ENCODE measurements at regions of chr18 and their contacts with region 1.

Region 1: GRCh38 chr18:35949903-35950627 is 22.4 kb upstream of the RMP24 start:
- DNase-seq: peak; percentile 52 to 73 (median 69)
- H3K4me3 ChIP-seq: peak overlapping the region; percentile 25 to 78 (median 47)
- H3K4me3 Mint-ChIP-seq: peak overlapping the region; percentile 75 to 77
- H3K27ac ChIP-seq: no peak overlapping the region
- H3K27ac Mint-ChIP-seq: peak overlapping the region in 1 of 7 donors; percentile 31
- H3K4me1 ChIP-seq: peaks cover 8 to 9% of the 10 kb centered on the region in 2 donors
- H3K4me1 Mint-ChIP-seq: peaks cover 9% of the 10 kb centered on the region
- H3K27me3 ChIP-seq: peaks cover 0 to 10% of the 10 kb centered on the region in 2 donors
- H3K27me3 Mint-ChIP-seq: peaks cover 7 to 27% (median 13%) of the 10 kb centered on the region in 3 donors
- CTCF ChIP-seq: peak; percentile 97

Region 2: GRCh38 chr18:35386600-35387351 is 563.3 kb before region 1 on chr18:
- intact Hi-C with region 1: loop called in 1 of 2 experiments (anchors 5 kb)
- DNase-seq: peak; percentile 69 to 75 (median 69)
- H3K4me3 ChIP-seq: no peak overlapping the region
- H3K4me3 Mint-ChIP-seq: no peak overlapping the region
- H3K27ac ChIP-seq: no peak overlapping the region
- H3K27ac Mint-ChIP-seq: peak overlapping the region in 1 of 7 donors; percentile 15
- H3K4me1 ChIP-seq: no peaks in the 10 kb centered on the region
- H3K4me1 Mint-ChIP-seq: peaks cover 7% of the 10 kb centered on the region
- H3K27me3 ChIP-seq: peaks cover 0 to 2% of the 10 kb centered on the region in 2 donors
- H3K27me3 Mint-ChIP-seq: peaks cover 0 to 4% (median 2%) of the 10 kb centered on the region in 3 donors
- CTCF ChIP-seq: peak; percentile 98

Region 3: DNA sequence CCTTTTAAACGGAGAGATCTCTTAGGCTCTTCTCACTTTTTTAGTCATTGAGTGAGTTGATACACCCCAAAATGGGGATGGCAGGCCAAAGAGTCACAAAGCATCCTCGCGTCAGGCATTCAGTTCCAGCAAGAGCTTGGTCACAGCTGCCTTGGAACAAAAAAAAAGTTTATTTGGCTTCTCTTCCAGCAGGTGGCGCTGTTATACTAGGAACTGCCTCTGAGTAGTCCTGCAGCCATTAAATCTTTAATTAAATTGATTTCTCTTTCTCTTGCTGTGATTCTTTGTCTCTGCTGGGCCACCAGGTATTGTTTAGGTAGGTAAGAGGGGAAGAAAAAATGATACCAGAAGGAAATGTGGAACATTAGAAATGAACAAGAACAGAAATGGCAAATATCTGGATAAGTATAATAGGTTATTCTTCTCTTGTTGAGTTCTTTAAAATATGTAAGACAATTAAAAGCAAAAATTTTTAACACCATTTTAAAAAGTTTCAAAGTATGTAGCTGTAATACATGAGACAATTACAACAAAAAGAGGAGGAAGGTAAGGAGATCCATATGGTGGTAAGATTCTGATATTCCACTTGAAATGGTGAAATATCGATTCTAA is 193.5 kb before region 1 on chr18:
- intact Hi-C with region 1: loop called (anchors 2 kb)
- DNase-seq: peak; percentile 44 to 66 (median 65)
- H3K4me3 ChIP-seq: no peak overlapping the region
- H3K4me3 Mint-ChIP-seq: no peak overlapping the region
- H3K27ac ChIP-seq: no peak overlapping the region
- H3K27ac Mint-ChIP-seq: no peak overlapping the region
- H3K4me1 ChIP-seq: peaks cover 0 to 4% of the 10 kb centered on the region in 2 donors
- H3K4me1 Mint-ChIP-seq: peaks cover 7% of the 10 kb centered on the region
- H3K27me3 ChIP-seq: no peaks in the 10 kb centered on the region
- H3K27me3 Mint-ChIP-seq: peaks cover 0 to 9% (median 3%) of the 10 kb centered on the region in 3 donors
- CTCF ChIP-seq: peak; percentile 81

Region 4: DNA sequence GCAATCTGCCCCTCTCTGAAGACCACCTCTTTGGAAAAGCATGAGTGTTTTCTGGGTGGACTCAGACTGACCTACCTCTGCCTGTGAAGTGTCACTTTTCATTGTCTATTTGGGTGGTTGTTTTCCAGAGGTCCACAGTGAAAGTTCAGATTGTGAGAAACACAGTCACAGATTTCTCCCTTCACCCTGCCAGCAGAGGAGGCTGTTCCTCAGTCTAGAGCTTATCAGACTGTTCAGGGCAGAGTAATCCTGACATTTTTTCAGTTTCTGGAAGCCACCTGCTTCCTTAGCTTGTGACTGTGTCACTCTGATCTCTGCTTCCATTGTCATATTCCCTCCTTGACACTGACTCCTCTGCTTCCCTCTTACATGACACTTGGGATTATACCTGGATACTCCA is 33.0 kb before region 1 on chr18:
- intact Hi-C with region 1: no loop called
- DNase-seq: no peak
- H3K4me3 ChIP-seq: no peak overlapping the region
- H3K4me3 Mint-ChIP-seq: no peak overlapping the region
- H3K27ac ChIP-seq: no peak overlapping the region
- H3K27ac Mint-ChIP-seq: no peak overlapping the region
- H3K4me1 ChIP-seq: peaks cover 4 to 6% of the 10 kb centered on the region in 2 donors
- H3K4me1 Mint-ChIP-seq: peaks cover 5% of the 10 kb centered on the region
- H3K27me3 ChIP-seq: no peaks in the 10 kb centered on the region
- H3K27me3 Mint-ChIP-seq: peaks cover 0 to 12% (median 3%) of the 10 kb centered on the region in 3 donors
- CTCF ChIP-seq: no peak

Region 5: GRCh38 chr18:36241831-36242230 is 291.8 kb after region 1 on chr18:
- intact Hi-C with region 1: no loop called
- DNase-seq: no peak
- H3K4me3 ChIP-seq: no peak overlapping the region
- H3K4me3 Mint-ChIP-seq: no peak overlapping the region
- H3K27ac ChIP-seq: no peak overlapping the region
- H3K27ac Mint-ChIP-seq: no peak overlapping the region
- H3K4me1 ChIP-seq: no peaks in the 10 kb centered on the region
- H3K4me1 Mint-ChIP-seq: no peaks in the 10 kb centered on the region
- H3K27me3 ChIP-seq: no peaks in the 10 kb centered on the region
- H3K27me3 Mint-ChIP-seq: peaks cover 0 to 5% (median 4%) of the 10 kb centered on the region in 3 donors
- CTCF ChIP-seq: no peak

Region 6: DNA sequence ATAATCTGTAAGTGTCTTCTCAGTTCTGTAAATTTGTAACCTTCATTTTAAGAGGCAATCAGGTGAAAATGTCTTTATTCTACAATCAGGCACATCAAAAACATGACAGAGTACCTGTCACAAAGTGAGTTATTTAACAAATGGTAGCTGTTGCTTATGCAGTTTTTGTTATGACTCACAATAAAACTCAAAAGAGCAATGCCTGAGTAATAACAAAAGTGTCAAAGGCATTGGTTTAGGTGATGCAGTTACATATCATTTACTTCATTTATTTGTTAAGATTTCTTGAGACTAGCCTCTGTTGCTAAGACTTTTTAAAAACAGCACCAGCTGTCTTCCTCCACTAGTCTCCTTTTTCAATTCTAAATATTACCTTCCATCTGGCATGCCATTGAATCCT is 1056.7 kb after region 1 on chr18:
- intact Hi-C with region 1: no loop called
- DNase-seq: no peak
- H3K4me3 ChIP-seq: no peak overlapping the region
- H3K4me3 Mint-ChIP-seq: no peak overlapping the region
- H3K27ac ChIP-seq: no peak overlapping the region
- H3K27ac Mint-ChIP-seq: no peak overlapping the region
- H3K4me1 ChIP-seq: no peaks in the 10 kb centered on the region
- H3K4me1 Mint-ChIP-seq: no peaks in the 10 kb centered on the region
- H3K27me3 ChIP-seq: no peaks in the 10 kb centered on the region
- H3K27me3 Mint-ChIP-seq: peaks cover 0 to 3% (median 0%) of the 10 kb centered on the region in 3 donors
- CTCF ChIP-seq: no peak